A673 (cell line): ENCODE measurements at regions of chr17 and their contacts with region 1.

Region 1: DNA sequence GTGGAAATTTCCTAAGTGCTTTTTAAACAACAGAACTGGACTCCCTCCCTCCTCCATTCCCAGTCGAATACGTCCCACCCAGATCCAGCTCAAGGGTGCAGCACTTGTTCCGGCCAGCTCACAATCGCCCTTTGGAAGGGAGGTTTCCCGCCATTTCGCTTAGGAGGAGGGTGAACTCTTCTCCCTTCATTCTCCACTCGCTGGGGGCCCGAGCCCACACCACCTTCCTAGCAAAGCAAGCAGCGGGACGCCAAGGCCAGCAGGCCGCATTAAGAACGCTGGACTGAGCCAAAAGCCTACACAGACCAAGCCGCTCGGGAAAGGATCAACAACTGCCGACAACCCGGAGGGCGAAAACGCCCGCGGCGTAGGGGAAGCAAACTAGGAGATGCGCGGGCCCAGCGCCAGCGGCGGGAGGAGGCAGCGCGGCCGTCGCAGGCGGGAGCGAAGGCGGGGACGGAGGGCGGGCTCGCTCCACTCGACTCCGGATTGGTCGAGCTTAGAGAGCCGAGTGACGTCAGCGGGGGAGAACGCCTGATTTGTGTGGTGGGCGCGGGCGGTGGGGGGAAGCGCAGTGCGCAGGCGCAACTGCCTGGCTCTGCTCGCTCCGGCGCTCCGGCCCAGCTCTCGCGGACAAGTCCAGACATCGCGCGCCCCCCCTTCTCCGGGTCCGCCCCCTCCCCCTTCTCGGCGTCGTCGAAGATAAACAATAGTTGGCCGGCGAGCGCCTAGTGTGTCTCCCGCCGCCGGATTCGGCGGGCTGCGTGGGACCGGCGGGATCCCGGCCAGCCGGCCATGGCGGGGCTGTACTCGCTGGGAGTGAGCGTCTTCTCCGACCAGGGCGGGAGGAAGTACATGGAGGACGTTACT is at the start of gene PPM1D:
- DNase-seq: peak; percentile 99
- H3K4me3 ChIP-seq: peak within 1 kb of the TSS; percentile 75
- H3K27ac ChIP-seq: peak within 1 kb of the TSS; percentile 94
- H3K4me1 ChIP-seq: peaks cover 11% of the 10 kb centered on the region
- H3K27me3 ChIP-seq: no peaks in the 10 kb centered on the region
- CTCF ChIP-seq: no peak
- total RNA-seq, gene PPM1D: 17.1 and 17.8 TPM in 2 replicates

Region 2: DNA sequence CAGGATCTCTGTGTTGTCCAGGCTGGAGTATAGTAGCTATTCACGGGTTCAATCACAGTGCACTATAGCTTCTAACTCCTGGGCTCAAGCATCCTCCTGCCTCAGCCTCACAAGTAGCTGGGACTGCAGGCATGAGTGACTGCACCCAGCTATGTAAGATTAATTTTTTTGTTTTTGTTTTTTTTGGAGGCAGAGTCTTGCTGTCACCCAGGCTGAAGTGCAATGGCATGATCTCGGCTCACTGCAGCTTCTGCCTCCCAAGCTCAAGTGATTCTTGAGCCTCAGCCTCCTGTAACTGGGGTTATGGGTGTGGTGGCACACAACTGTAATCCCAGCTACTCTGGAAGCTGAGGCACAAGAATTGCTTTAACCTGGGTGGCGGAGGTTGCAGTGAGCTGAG is 16.0 kb after region 1 on chr17:
- CTCF ChIA-PET with region 1: no interaction called
- POLR2A ChIA-PET with region 1: interaction called, 10 read pairs
- intact Hi-C with region 1: no loop called
- DNase-seq: no peak
- H3K4me3 ChIP-seq: no peak overlapping the region
- H3K27ac ChIP-seq: no peak overlapping the region
- H3K4me1 ChIP-seq: no peaks in the 10 kb centered on the region
- H3K27me3 ChIP-seq: no peaks in the 10 kb centered on the region
- CTCF ChIP-seq: no peak

Region 3: DNA sequence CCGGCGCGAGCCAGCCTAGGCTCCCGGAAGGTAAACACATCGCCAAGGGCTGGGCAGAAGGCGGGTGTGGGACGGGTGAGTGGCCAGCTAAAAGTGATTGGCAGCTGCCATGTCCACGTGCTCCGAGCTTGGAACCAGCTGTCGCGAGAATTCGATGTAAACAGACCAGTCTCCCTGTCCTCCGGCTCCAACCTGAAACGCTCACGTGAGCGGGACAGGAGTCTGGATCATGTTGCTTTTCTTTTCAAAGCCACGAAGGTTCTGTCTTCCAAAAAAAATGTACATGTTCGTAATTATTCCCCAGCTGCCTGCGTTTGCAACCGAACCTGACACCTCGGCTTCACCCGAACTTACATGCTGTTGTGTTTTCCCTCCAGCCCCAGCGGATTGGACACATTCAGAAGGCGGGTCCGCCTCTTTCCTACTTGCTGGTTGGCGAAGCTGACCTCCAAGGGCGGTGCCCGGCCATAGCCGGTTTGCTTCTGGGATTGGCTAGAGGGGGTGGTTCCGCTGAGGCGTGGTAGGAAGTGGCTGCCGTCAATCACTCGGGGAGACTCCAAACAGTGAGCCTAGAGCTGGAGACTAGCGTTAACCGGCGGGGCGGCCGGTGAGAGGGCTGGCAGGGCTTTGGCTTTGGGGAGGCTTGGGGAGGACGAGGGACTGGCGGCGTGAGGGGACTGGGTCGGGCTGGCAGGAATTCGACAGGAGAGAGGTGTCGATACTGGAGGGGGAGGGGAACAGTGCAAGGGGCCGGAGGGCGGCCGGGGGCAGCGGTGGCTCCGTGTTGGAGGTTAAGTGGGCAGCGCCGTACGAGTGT is 77.7 kb after region 1 on chr17 and contains the start of gene BCAS3:
- CTCF ChIA-PET with region 1: no interaction called
- POLR2A ChIA-PET with region 1: no interaction called
- intact Hi-C with region 1: loop called (anchors 10 kb)
- DNase-seq: peak; percentile 99
- H3K4me3 ChIP-seq: peak within 1 kb of the TSS; percentile 69
- H3K27ac ChIP-seq: peak within 1 kb of the TSS; percentile 66
- H3K4me1 ChIP-seq: peaks cover 5% of the 10 kb centered on the region
- H3K27me3 ChIP-seq: no peaks in the 10 kb centered on the region
- CTCF ChIP-seq: no peak
- total RNA-seq, gene BCAS3: 14.4 and 23.4 TPM in 2 replicates

Region 4: GRCh38 chr17:61065263-61065773 is 465.5 kb after region 1 on chr17:
- CTCF ChIA-PET with region 1: no interaction called
- POLR2A ChIA-PET with region 1: no interaction called
- intact Hi-C with region 1: no loop called
- DNase-seq: no peak
- H3K4me3 ChIP-seq: no peak overlapping the region
- H3K27ac ChIP-seq: no peak overlapping the region
- H3K4me1 ChIP-seq: no peaks in the 10 kb centered on the region
- H3K27me3 ChIP-seq: no peaks in the 10 kb centered on the region
- CTCF ChIP-seq: no peak

Region 5: DNA sequence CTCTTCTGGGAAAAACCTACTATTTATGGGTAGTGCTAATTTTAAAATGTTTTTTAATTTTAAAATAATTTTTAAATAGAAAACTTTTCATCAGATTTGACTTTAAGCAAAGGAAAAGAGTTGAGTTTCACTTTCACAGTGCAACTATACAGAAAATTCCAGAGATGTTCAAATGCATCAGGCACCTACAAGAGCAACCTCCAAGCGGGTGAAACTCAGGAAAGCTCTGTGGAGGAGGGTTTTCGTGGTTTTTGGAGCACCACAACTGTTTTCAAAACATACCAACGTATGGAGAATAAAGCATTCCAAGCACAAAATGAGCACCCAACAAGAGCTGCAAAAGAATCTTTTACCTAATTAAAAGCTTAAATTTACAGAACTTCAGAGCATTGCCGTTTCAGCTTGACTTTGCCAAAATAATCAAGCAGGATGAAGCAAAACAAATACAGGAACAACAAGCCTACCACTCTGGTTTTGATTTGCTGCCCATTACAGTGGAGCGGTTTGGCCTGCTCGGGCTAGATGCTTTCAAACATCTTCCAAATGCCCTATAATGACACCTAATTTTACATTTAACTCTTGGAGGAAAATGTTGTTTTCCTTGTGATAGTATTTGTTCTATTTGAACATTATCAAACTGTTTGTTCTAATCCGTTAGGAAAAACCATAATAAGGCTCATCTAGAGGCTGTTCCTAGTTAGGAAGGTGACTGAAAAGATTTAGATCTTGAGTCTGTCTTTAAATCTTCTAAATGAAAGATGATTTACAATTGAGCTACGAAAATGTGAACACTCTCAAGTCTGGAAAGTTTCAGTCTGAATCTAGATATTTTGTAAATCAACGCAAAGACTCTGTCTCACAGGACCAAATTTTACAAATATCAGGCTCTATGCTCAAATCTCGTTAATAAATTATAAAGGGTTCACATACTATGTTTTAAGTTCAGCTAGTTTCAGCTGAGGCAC is 956.7 kb after region 1 on chr17:
- CTCF ChIA-PET with region 1: no interaction called
- POLR2A ChIA-PET with region 1: interaction called, 10 read pairs
- intact Hi-C with region 1: no loop called
- DNase-seq: no peak
- H3K4me3 ChIP-seq: no peak overlapping the region
- H3K27ac ChIP-seq: no peak overlapping the region
- H3K4me1 ChIP-seq: peaks cover 3% of the 10 kb centered on the region
- H3K27me3 ChIP-seq: no peaks in the 10 kb centered on the region
- CTCF ChIP-seq: no peak